SK-N-SH (cell line): ENCODE measurements at regions of chr17 and their contacts with region 1.

Region 1: GRCh38 chr17:77957857-77958715 is at the start of gene TNRC6C:
- DNase-seq: peak; percentile 100
- H3K4me3 ChIP-seq: peak within 1 kb of the TSS; percentile 80 to 86
- H3K27ac ChIP-seq: peak within 1 kb of the TSS in 1 of 2 experiments; percentile 92; a peak in 2 of 4 replicates
- H3K4me1 ChIP-seq: peaks cover 0 to 35% of the 10 kb centered on the region in 2 experiments; a peak in 3 of 4 replicates
- H3K27me3 ChIP-seq: peaks cover 42% of the 10 kb centered on the region; the same call in 1 of the 2 replicates
- CTCF ChIP-seq: no peak
- EP300 ChIP-seq: no peak; a peak in 1 of 4 replicates
- RAD21 ChIP-seq: peak; percentile 22; the same call in 1 of the 2 replicates
- polyA plus RNA-seq, gene TNRC6C: 1.6 and 2.2 TPM in 2 replicates

Region 2: DNA sequence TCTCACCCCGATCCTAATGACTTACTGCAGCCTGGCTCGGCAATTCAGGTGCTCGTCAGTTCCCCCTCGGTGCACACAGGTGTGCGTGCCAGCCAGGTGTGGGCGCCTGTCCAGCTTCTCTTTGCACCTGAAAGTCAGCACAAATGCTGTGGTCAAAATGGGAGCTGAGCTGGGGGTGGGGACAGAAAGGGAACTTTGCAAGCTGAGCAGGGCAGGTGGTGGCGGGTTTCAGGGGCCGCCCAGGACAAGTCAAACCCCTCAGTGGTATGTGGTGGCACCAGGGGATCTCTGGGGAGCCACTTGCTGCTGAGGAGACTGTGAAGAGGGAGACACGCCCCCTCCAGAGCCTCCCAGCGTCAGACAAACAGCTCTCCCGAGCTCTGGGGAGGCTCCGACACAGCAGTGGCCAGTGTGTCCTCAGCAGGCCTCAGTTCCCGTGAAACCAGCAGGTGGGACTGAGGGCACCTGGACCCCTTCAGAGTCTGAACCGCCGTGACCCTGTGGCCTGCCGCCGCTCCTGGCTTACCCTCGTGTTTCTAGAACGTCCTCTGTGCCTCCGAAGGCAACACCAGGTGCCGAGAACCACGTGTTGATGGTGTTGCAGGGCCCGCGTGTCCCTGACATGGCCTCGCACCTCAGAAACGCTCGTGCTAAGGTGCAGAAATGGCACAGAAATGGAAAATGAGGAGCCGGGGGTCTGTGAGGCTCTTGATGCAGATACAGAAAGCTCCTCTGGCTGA is 233.0 kb before region 1 on chr17:
- CTCF ChIA-PET with region 1: interaction called, 3 read pairs
- POLR2A ChIA-PET with region 1: interaction called, 15 read pairs
- DNase-seq: no peak
- H3K4me3 ChIP-seq: no peak overlapping the region
- H3K27ac ChIP-seq: no peak overlapping the region
- H3K4me1 ChIP-seq: peaks cover 0 to 52% of the 10 kb centered on the region in 2 experiments; a peak in 1 of 4 replicates
- H3K27me3 ChIP-seq: peaks cover 8% of the 10 kb centered on the region; the same call in 1 of the 2 replicates
- CTCF ChIP-seq: no peak
- EP300 ChIP-seq: no peak
- RAD21 ChIP-seq: no peak

Region 3: DNA sequence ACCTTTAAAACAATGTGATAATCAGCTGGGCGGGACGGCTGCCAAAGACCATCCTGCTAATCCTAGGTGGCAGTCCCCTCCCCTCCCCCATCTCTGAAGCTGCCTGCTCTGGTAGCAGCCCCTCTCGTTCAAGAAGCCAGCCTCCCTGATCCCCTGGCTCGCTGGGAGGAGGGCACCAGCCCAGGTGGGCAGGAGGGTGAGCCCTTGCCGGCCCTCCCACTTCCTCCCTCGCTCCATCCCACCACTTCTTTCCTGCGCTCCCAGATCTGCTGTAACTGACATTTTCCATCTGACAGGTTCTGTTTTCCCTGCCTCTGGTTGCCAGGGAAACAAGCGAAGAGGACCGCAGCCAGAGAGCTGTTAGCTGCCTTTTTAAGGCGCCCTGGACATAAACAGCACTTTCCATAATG is 155.3 kb before region 1 on chr17:
- CTCF ChIA-PET with region 1: interaction called, 3 read pairs
- POLR2A ChIA-PET with region 1: interaction called, 14 read pairs
- DNase-seq: peak; percentile 93
- H3K4me3 ChIP-seq: no peak overlapping the region; a peak in 1 of 4 replicates
- H3K27ac ChIP-seq: peak overlapping the region in 1 of 2 experiments; percentile 95; a peak in 2 of 4 replicates
- H3K4me1 ChIP-seq: peaks cover 0 to 32% of the 10 kb centered on the region in 2 experiments; a peak in 2 of 4 replicates
- H3K27me3 ChIP-seq: no peaks in the 10 kb centered on the region; the same call in 1 of the 2 replicates
- CTCF ChIP-seq: no peak
- EP300 ChIP-seq: peak in 1 of 2 experiments; percentile 61; a peak in 2 of 4 replicates
- RAD21 ChIP-seq: peak; percentile 52

Region 4: GRCh38 chr17:77881545-77881944 is 76.5 kb before region 1 on chr17:
- CTCF ChIA-PET with region 1: interaction called, 4 read pairs
- POLR2A ChIA-PET with region 1: interaction called, 131 read pairs
- DNase-seq: peak; percentile 86
- H3K4me3 ChIP-seq: no peak overlapping the region
- H3K27ac ChIP-seq: peak overlapping the region; percentile 31 to 100; a peak in 3 of 4 replicates
- H3K4me1 ChIP-seq: peaks cover 14 to 67% of the 10 kb centered on the region in 2 experiments
- H3K27me3 ChIP-seq: 0 out of 2 replicates have a peak, but pooled peaks cover 6% of the 10 kb centered on the region
- CTCF ChIP-seq: no peak
- EP300 ChIP-seq: peak in 1 of 2 experiments; percentile 75; a peak in 2 of 4 replicates
- RAD21 ChIP-seq: peak; percentile 50

Region 5: GRCh38 chr17:77936881-77937280 is 21.2 kb before region 1 on chr17:
- CTCF ChIA-PET with region 1: interaction called, 9 read pairs
- POLR2A ChIA-PET with region 1: interaction called, 37 read pairs
- DNase-seq: no peak
- H3K4me3 ChIP-seq: no peak overlapping the region
- H3K27ac ChIP-seq: no peak overlapping the region
- H3K4me1 ChIP-seq: no peaks in the 10 kb centered on the region; a peak in 1 of 4 replicates
- H3K27me3 ChIP-seq: peaks cover 32% of the 10 kb centered on the region; the same call in 1 of the 2 replicates
- CTCF ChIP-seq: no peak
- EP300 ChIP-seq: no peak
- RAD21 ChIP-seq: no peak

Region 6: DNA sequence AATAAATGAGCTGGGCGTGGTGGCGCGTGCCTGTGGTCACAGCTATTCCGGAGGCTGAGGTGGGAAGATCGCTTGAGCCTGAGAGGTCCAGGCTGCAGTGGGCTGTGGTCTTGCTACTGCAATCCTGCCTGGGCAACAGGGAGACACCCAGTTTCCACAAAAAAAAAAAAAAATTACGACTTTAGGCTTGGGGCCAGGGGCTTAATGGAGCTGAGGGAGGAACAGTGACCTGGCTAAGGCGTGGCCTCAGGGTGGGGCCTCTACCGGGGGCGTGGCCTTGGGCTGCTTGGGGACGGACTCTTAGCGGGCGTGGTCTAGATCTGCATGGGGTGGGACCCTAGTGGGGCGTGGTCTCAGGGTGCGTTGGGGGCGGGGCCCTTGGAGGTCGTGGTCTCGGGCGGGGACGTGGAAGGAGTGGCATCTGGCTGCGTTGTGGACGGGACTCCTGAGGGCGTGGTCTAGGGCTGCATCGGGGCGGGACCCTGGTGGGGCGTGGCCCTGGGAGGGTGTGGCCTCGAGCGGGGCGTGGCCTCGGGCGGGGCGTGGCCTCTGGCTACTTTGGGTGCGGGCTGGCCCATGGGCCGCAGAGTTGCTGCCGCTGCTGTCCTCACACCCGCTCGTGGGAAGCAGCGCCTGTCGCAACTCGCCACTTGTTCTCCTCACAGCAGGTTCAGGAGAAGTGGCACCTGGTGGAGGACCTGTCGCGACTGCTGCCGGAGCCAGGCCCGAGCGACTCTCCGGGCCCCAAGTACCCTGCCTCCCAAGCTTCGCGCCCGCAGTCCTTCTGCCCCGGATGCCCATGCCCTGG is 182.3 kb after region 1 on chr17:
- CTCF ChIA-PET with region 1: no interaction called
- POLR2A ChIA-PET with region 1: no interaction called
- DNase-seq: peak; percentile 96
- H3K4me3 ChIP-seq: no peak overlapping the region
- H3K27ac ChIP-seq: no peak overlapping the region
- H3K4me1 ChIP-seq: peaks cover 4 to 19% of the 10 kb centered on the region in 2 experiments; a peak in 2 of 4 replicates
- H3K27me3 ChIP-seq: no peaks in the 10 kb centered on the region
- CTCF ChIP-seq: no peak
- EP300 ChIP-seq: no peak
- RAD21 ChIP-seq: no peak

Region 7: DNA sequence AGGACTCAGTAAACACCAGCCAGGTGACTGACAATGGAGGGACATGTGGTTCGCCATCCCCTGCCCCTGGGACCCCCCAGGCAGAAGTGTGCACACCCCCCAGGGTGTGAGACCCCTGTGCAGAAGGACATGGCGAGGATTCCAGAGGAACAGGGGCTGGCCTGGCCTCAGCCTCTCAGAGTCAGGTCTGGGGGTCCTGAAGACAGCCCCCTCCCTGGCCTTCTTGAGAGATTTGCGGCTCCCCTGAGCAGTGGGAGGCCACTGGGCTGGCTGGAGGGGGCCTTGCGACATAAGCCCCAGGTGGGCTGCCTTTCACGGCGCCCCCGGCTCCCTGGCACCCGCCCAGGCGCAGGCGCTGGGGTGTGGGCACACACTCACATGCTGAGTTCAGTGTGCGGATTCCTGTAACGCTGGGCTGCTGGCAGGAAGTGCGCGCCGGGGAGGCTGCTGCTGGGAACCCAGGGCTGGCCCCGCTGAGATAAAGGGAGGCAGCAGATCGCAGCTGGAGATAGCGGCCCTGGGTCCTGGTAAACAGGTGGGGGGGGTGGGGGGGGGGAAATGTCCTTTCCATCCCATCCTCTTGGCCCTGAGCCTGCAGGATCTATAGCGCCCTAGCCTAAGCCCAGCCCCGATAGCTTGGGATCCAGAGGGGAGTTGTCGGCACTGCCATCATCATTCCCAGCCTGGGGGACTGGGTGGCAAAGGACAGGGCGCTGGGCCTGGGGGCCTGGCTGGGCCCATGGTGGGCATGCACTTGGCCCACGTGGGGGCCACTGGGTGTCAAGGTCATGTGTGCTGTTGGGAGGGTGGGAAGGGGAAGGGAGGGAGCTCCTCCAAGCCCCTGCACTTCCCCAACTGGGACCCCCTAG is 300.5 kb after region 1 on chr17:
- CTCF ChIA-PET with region 1: no interaction called
- POLR2A ChIA-PET with region 1: no interaction called
- DNase-seq: peak; percentile 96
- H3K4me3 ChIP-seq: no peak overlapping the region; a peak in 1 of 4 replicates
- H3K27ac ChIP-seq: peak overlapping the region in 1 of 2 experiments; percentile 99; a peak in 3 of 4 replicates
- H3K4me1 ChIP-seq: peaks cover 5 to 68% of the 10 kb centered on the region in 2 experiments; a peak in 2 of 4 replicates
- H3K27me3 ChIP-seq: no peaks in the 10 kb centered on the region
- CTCF ChIP-seq: no peak
- EP300 ChIP-seq: peak in 1 of 2 experiments; percentile 95; a peak in 2 of 4 replicates
- RAD21 ChIP-seq: no peak